ENCODE measurements at regions of chr15 and their contacts with region 1.

Region 1: DNA sequence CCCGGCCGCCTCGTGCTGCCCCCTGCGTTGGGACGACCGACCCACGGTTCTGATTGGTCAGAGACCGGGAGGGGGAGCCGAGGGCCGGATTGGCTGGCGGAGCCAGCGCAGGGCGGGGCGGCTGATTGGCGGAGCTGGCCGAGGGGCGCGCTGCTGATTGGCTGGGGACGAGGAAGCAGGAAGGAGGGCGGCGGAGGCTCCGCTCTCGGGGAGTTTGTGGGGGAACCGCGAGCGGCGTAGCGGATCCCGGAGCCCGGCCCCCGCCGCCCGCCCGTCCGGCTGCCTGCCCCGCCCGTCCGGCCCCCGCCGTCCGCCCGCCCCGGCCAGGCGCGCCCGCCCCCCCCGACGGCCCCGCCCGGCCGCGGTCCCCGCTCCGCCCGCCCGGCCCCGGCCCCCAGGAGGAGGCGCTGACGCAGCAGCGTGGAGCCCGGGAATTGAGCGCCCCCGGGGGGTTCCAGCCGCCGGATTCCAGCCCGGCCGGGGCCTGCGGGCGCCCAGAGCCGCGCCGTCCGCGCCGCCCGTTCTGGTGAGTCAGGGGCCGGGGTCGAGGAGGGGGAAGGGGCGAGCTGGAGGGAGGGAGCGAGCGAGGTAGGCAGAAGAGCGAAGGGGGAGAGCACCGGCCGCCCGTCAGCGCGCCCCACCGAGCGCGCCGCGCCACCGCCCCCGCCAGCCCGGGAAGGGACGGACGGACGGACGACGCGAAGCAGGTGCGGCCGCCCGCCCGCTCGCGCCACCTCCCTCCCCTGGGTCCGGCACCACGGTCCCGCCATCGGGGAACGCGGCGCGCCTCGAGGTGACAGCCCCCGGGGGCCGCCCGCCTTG is at the start of gene BAHD1:
- DNase-seq: peak; percentile 95
- ATAC-seq: peak; percentile 82
- H3K4me3 ChIP-seq: peak within 1 kb of the TSS; percentile 86
- H3K27ac ChIP-seq: no peak within 1 kb of the TSS
- H3K4me1 ChIP-seq: peaks cover 39% of the 10 kb centered on the region
- H3K27me3 ChIP-seq: no peaks in the 10 kb centered on the region
- CTCF ChIP-seq: no peak
- total RNA-seq, gene BAHD1: 18.8 and 19.9 TPM in 2 replicates

Region 2: DNA sequence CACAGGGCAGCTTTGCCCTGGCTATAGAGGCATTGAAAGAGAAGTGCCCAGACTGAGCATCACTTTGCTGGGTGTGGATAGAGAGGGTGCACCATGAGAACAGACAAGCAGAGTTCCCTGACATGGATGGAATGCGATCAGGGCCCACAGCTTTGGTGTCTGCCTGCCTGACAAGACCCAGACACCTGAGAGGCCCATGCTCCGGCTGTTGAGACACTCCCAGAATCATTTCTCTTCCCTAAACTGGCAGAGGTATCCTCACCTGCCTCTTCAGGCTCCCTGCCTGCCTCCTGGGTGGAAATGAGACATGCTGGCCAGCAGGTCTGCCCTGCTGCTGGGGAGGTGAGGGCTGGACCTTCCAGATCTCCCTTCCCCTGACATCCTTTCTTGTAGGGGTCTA is 19.4 kb after region 1 on chr15:
- CTCF ChIA-PET with region 1: no interaction called
- POLR2A ChIA-PET with region 1: no interaction called
- intact Hi-C with region 1: no loop called
- DNase-seq: no peak
- ATAC-seq: no peak
- H3K4me3 ChIP-seq: no peak overlapping the region
- H3K27ac ChIP-seq: no peak overlapping the region
- H3K4me1 ChIP-seq: peaks cover 3% of the 10 kb centered on the region
- H3K27me3 ChIP-seq: no peaks in the 10 kb centered on the region
- CTCF ChIP-seq: no peak

Region 3: GRCh38 chr15:40470423-40471104 is 29.6 kb after region 1 on chr15 and contains the start of gene CHST14:
- CTCF ChIA-PET with region 1: no interaction called
- POLR2A ChIA-PET with region 1: no interaction called
- intact Hi-C with region 1: loop called (anchors 2 kb)
- DNase-seq: peak; percentile 62
- ATAC-seq: peak; percentile 77
- H3K4me3 ChIP-seq: peak within 1 kb of the TSS; percentile 96
- H3K27ac ChIP-seq: peak within 1 kb of the TSS; percentile 38
- H3K4me1 ChIP-seq: peaks cover 20% of the 10 kb centered on the region
- H3K27me3 ChIP-seq: no peaks in the 10 kb centered on the region
- CTCF ChIP-seq: no peak
- total RNA-seq, gene CHST14: 12.2 and 13.0 TPM in 2 replicates

Region 4: GRCh38 chr15:40500584-40501330 is 59.8 kb after region 1 on chr15:
- CTCF ChIA-PET with region 1: no interaction called
- POLR2A ChIA-PET with region 1: no interaction called
- intact Hi-C with region 1: loop called (anchors 2 kb)
- DNase-seq: peak; percentile 75
- ATAC-seq: peak; percentile 79
- H3K4me3 ChIP-seq: peak overlapping the region; percentile 19; the same call in 1 of the 2 replicates
- H3K27ac ChIP-seq: peak overlapping the region; percentile 71
- H3K4me1 ChIP-seq: peaks cover 39% of the 10 kb centered on the region
- H3K27me3 ChIP-seq: no peaks in the 10 kb centered on the region
- CTCF ChIP-seq: no peak